AG04449 (cell line): ENCODE measurements at regions of chr11 and their contacts with region 1.

Region 1: DNA sequence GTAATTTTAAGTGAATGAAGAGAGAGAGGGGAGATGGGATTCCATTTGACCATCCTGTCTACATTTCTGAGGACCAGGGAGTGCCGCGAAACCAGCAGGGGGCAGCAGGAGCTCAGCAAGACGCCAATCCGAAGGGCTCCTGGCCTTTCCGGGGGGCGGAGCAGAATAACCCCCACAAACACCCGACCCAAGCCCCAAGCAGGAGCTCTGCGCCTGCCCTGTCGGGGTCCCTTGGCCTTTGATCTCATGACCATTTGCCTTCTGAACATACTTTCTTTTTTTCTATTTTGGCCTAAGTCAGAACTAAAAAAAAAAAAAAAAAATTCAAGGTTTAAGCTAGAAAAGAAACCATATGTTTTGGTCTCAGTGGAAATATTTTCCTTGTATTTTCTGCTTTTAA is 21.9 kb upstream of the SCN2B start:
- DNase-seq: no peak
- H3K4me3 ChIP-seq: no peak overlapping the region; the same call in 1 of the 2 replicates
- CTCF ChIP-seq: peak; percentile 90

Region 2: DNA sequence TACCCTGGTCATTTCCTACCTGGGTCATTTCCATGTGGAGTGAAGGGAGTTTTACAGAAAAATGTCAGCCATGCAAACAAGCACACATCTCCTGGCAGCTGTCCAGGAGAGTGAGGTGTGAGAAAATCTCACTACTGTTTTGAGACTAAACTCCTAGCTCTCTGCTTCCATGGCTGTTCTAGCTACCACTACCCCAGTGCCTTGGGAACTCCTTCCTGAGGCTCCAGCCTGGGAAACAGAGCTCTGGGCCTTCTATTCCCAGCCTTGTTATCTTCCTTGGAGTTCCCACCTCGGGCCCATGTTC is 266.4 kb before region 1 on chr11:
- CTCF ChIA-PET with region 1: no interaction called
- POLR2A ChIA-PET with region 1: no interaction called
- DNase-seq: no peak
- H3K4me3 ChIP-seq: no peak overlapping the region
- CTCF ChIP-seq: no peak

Region 3: GRCh38 chr11:118098996-118099837 is 99.2 kb before region 1 on chr11:
- CTCF ChIA-PET with region 1: no interaction called
- POLR2A ChIA-PET with region 1: no interaction called
- DNase-seq: no peak
- H3K4me3 ChIP-seq: no peak overlapping the region
- CTCF ChIP-seq: no peak

Region 4: DNA sequence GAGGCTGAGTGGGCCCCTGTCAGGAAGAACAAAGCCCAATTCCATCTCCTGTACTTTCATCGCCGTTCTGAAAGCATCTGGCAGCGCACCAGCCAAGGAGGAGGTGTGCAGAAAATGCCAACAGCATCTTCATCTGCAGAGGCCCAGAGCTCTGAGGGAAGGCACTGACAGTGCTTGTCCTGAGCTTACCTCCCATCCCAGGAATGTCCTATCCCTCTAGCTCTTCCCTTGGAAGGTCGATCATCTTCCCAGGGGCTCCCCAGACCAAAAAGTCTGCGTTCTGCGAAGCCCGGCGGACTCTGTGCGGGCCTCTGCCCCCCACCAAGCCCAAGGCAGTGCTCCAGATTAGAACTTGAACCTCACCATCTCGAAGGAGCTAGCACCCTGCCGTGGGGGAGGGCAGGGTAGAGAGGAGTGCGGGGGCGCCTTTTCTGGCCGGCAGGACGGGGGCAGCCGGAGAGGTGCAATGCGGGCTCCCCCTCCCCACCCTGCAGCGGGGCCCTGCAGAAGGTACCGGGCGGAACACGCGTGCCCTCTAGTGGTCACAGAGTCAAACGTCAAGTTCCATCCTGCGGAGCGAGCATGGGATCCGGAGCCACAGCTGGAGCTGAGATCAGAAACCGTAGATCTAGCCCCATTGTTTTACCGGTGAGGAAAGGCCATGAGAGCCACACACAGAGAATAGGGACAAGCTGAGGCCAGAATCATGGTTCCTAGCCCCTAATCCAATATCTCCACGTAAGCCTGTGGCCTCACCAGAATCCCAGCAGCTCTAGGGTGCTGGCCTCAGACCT is 26.9 kb before region 1 on chr11:
- CTCF ChIA-PET with region 1: interaction called, 10 read pairs
- POLR2A ChIA-PET with region 1: no interaction called
- DNase-seq: no peak
- H3K4me3 ChIP-seq: no peak overlapping the region
- CTCF ChIP-seq: peak; percentile 89

Region 5: GRCh38 chr11:118186346-118187107 is 11.8 kb before region 1 on chr11:
- CTCF ChIA-PET with region 1: interaction called, 17 read pairs
- POLR2A ChIA-PET with region 1: no interaction called
- DNase-seq: no peak
- H3K4me3 ChIP-seq: no peak overlapping the region
- CTCF ChIP-seq: no peak

Region 6: DNA sequence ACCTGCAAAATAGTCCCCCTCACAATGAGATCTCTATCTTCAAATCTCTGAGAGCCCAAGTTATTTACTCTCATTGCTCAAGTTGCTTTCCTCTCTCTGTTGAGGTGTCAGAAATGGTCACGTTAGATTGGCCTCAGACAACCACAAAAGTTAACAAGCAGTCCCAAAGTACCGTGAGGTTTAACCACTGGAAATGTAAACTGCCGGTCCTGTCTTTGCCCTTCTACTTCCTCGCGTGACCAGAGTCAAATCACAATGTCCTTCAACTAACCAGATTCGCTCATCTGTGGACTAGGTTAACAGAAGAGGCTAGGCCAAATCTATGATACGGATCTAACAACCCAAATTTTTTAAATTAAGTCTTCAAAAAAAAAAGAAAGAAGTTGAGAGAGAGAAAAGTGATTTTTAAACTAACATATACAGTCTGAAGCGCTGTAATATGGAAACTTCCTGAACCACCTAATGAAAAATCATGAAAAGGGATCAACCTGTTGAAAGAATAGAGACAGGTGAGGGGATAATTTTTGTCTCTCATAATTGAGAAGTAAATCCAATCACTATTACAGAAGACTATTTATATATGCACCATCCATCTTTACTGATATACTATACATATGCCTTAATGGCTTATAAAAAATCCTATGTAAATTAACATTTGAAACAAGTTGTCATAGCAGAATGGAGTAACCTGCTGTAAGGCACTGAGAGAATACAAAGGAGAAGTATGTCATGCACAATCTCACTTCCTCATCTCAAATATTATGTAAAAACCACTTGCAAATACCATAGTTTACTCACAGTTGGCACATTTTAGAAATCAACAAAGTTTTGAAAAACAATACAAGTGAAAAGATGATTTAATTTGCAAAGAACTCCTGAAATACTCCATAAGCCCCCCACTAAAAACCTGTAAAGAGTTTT is 29.8 kb after region 1 on chr11:
- CTCF ChIA-PET with region 1: interaction called, 11 read pairs
- POLR2A ChIA-PET with region 1: no interaction called
- DNase-seq: no peak
- H3K4me3 ChIP-seq: no peak overlapping the region
- CTCF ChIP-seq: no peak

Region 7: GRCh38 chr11:118343981-118344515 is 145.7 kb after region 1 on chr11 and contains the start of gene CD3G:
- CTCF ChIA-PET with region 1: interaction called, 94 read pairs
- POLR2A ChIA-PET with region 1: no interaction called
- DNase-seq: no peak
- H3K4me3 ChIP-seq: no peak within 1 kb of the TSS
- CTCF ChIP-seq: no peak